CD4-positive, alpha-beta T cell (primary cell): ENCODE measurements at regions of chr4 and their contacts with region 1.

Region 1: GRCh38 chr4:81600520-81601357 is 129.0 kb upstream of the RASGEF1B start:
- DNase-seq: no peak
- ATAC-seq: no peak
- H3K4me3 ChIP-seq: no peak overlapping the region
- H3K4me3 Mint-ChIP-seq: no peak overlapping the region
- H3K27ac ChIP-seq: no peak overlapping the region
- H3K27ac Mint-ChIP-seq: no peak overlapping the region
- H3K4me1 ChIP-seq: no peaks in the 10 kb centered on the region
- H3K4me1 Mint-ChIP-seq: no peaks in the 10 kb centered on the region
- H3K27me3 ChIP-seq: peaks cover 0 to 3% of the 10 kb centered on the region in 2 experiments
- H3K27me3 Mint-ChIP-seq: no peaks in the 10 kb centered on the region
- CTCF ChIP-seq: no peak

Region 2: GRCh38 chr4:81555489-81555888 is 45.2 kb before region 1 on chr4:
- CTCF ChIA-PET with region 1: no interaction called
- POLR2A ChIA-PET with region 1: no interaction called
- intact Hi-C with region 1: loop called in 1 of 2 experiments (anchors 5 kb)
- DNase-seq: no peak
- ATAC-seq: no peak
- H3K4me3 ChIP-seq: no peak overlapping the region
- H3K4me3 Mint-ChIP-seq: no peak overlapping the region
- H3K27ac ChIP-seq: no peak overlapping the region
- H3K27ac Mint-ChIP-seq: no peak overlapping the region
- H3K4me1 ChIP-seq: no peaks in the 10 kb centered on the region
- H3K4me1 Mint-ChIP-seq: peaks cover 6% of the 10 kb centered on the region
- H3K27me3 ChIP-seq: no peaks in the 10 kb centered on the region
- H3K27me3 Mint-ChIP-seq: no peaks in the 10 kb centered on the region
- CTCF ChIP-seq: no peak

Region 3: GRCh38 chr4:81659051-81659450 is 58.3 kb after region 1 on chr4:
- CTCF ChIA-PET with region 1: no interaction called
- POLR2A ChIA-PET with region 1: no interaction called
- intact Hi-C with region 1: loop called in 1 of 2 experiments (anchors 5 kb)
- DNase-seq: no peak
- ATAC-seq: no peak
- H3K4me3 ChIP-seq: no peak overlapping the region
- H3K4me3 Mint-ChIP-seq: no peak overlapping the region
- H3K27ac ChIP-seq: no peak overlapping the region
- H3K27ac Mint-ChIP-seq: no peak overlapping the region
- H3K4me1 ChIP-seq: no peaks in the 10 kb centered on the region
- H3K4me1 Mint-ChIP-seq: no peaks in the 10 kb centered on the region
- H3K27me3 ChIP-seq: no peaks in the 10 kb centered on the region
- H3K27me3 Mint-ChIP-seq: no peaks in the 10 kb centered on the region
- CTCF ChIP-seq: no peak

Region 4: DNA sequence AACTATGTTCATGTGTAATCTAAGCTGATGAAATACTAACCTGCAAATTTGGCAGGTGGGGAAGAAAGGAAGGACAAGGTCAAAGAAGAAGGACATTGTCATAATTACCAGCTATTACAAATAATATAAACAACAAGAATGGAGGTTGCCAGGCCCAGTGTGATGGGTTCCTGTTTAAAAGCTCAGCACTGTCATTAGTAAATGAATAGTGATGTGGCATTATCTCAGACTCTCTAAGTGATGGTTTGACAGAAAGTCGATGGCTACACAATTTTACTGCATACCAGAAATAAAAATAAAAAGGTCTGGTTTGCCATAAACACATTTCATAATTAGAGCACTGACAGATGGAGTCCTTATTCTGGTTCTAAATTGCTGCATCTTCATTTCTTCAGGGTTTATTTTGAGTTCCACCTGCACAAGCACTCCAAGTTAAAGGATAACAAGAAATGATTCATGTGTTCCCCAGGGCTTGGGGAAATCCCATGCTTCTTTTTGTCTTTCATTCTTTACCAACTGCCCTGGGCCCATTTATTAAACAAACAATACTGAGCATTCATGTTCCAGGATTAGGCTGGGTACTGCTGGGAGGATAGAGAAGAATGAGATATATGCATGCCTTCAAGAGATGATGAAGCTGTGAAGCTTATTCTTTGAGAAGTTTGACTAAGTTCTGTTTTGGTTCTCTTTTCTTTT is 238.8 kb after region 1 on chr4:
- CTCF ChIA-PET with region 1: no interaction called
- POLR2A ChIA-PET with region 1: no interaction called
- intact Hi-C with region 1: no loop called
- DNase-seq: no peak
- ATAC-seq: no peak
- H3K4me3 ChIP-seq: no peak overlapping the region
- H3K4me3 Mint-ChIP-seq: no peak overlapping the region
- H3K27ac ChIP-seq: no peak overlapping the region
- H3K27ac Mint-ChIP-seq: no peak overlapping the region
- H3K4me1 ChIP-seq: no peaks in the 10 kb centered on the region
- H3K4me1 Mint-ChIP-seq: no peaks in the 10 kb centered on the region
- H3K27me3 ChIP-seq: no peaks in the 10 kb centered on the region
- H3K27me3 Mint-ChIP-seq: no peaks in the 10 kb centered on the region
- CTCF ChIP-seq: no peak